Prostate gland (tissue), 2 donors: ENCODE measurements at regions of chr20 and their contacts with region 1.

Region 1: DNA sequence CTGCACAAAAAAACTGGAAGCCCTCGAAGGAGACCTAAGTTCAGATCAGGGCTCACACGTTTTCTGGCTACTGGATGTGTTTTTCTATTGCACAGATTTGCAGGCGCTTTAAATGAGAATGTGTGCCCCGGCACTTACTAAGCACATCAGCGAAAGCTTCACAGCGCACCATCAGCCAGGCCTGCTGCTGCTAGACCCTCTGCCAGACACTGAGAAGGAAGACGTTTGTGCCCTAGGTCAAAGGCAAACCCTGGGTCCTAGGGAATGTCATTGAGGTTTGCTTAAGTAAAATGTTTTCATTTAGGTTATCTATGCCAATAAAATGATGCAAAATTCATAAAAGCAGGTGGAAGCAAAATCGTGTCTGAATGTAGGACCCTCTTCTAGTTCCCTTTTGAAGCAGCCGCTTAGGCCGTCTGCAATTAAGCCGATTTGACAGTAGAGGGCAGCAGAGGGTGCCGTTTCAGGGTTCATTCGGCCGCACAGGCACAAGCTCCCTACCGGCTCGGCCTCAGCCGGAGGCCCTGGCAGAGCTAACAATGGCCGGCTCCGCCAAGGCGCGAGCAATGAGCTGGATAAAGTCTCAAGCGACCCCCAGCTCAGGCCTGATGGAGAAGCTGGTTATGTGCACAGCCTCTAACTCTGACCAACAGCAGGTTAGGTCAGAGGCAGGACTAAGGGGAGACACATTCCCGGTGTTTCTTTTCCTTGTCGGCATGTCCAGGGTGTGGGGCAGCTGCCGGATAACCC is 107.2 kb upstream of the FOXA2 start:
- DNase-seq: peak; percentile 66
- H3K4me3 ChIP-seq: no peak overlapping the region
- H3K27ac ChIP-seq: no peak overlapping the region
- H3K4me1 ChIP-seq: no peaks in the 10 kb centered on the region
- H3K27me3 ChIP-seq: no peaks in the 10 kb centered on the region
- CTCF ChIP-seq: peak; percentile 85 to 92 (median 88)
- POLR2A ChIP-seq: no peak

Region 2: GRCh38 chr20:22716821-22717351 is 25.3 kb after region 1 on chr20:
- intact Hi-C with region 1: no loop called
- DNase-seq: no peak
- H3K4me3 ChIP-seq: no peak overlapping the region
- H3K27ac ChIP-seq: no peak overlapping the region
- H3K4me1 ChIP-seq: no peaks in the 10 kb centered on the region
- H3K27me3 ChIP-seq: no peaks in the 10 kb centered on the region
- CTCF ChIP-seq: no peak
- POLR2A ChIP-seq: no peak

Region 3: GRCh38 chr20:23050847-23051631 is 359.5 kb after region 1 on chr20:
- intact Hi-C with region 1: loop called (anchors 10 kb)
- DNase-seq: peak; percentile 52
- H3K4me3 ChIP-seq: peak overlapping the region; percentile 24 to 28
- H3K27ac ChIP-seq: peak overlapping the region in 1 of 2 donors; percentile 27
- H3K4me1 ChIP-seq: no peaks in the 10 kb centered on the region
- H3K27me3 ChIP-seq: peaks cover 7% of the 10 kb centered on the region
- CTCF ChIP-seq: peak in 3 of 4 experiments; percentile 50 to 72 (median 52)
- POLR2A ChIP-seq: no peak

Region 4: GRCh38 chr20:23235173-23236027 is 543.9 kb after region 1 on chr20:
- intact Hi-C with region 1: loop called (anchors 5 kb)
- DNase-seq: peak; percentile 44
- H3K4me3 ChIP-seq: no peak overlapping the region
- H3K27ac ChIP-seq: no peak overlapping the region
- H3K4me1 ChIP-seq: no peaks in the 10 kb centered on the region
- H3K27me3 ChIP-seq: no peaks in the 10 kb centered on the region
- CTCF ChIP-seq: peak; percentile 41 to 88 (median 69)
- POLR2A ChIP-seq: no peak

Region 5: GRCh38 chr20:23340524-23340923 is 649.0 kb after region 1 on chr20:
- intact Hi-C with region 1: loop called (anchors 2 kb)
- DNase-seq: peak; percentile 66
- H3K4me3 ChIP-seq: no peak overlapping the region
- H3K27ac ChIP-seq: no peak overlapping the region
- H3K4me1 ChIP-seq: no peaks in the 10 kb centered on the region
- H3K27me3 ChIP-seq: no peaks in the 10 kb centered on the region
- CTCF ChIP-seq: peak; percentile 24 to 74 (median 63)
- POLR2A ChIP-seq: no peak